Ovary (tissue), 10 donors: ENCODE measurements at regions of chr5 and their contacts with region 1.

Region 1: DNA sequence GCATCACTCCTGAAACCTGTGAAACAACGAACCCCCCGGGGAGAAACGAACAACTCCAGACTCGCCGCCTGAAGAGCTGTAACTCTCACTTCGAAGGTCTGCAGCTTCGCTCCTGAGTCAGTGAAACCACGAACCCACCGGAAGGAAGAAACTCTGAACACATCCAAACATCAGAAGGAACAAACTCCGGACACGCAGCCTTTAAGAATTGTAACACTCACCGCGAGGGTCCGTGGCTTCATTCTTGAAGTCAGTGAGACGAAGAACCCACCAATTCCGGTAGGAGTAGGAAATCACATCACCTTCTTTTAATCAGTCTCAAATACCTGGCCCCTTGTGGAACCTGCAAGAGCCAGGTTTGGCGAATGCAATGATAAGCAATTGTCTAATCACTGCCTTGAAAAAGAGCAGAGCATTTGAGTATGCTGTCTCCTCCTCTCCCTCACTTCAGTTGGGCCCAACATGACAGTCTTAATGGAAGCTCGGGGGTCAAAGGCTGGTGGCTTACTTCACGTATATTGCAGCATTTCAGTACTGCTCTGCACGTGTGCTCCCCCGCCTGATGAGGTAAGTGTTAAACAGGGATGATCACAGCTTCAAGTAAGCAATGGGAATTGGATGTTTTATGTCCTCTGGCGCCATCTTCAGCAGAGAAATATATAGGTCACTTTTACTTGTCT is 473 bp downstream of the IRGM start:
- DNase-seq: peak in 4 of 5 donors; percentile 30 to 64 (median 38)
- H3K4me3 ChIP-seq: no peak overlapping the region
- H3K27ac ChIP-seq: no peak overlapping the region
- H3K4me1 ChIP-seq: no peaks in the 10 kb centered on the region
- H3K27me3 ChIP-seq: no peaks in the 10 kb centered on the region
- CTCF ChIP-seq: peak; percentile 32 to 90 (median 80)
- EP300 ChIP-seq: no peak
- POLR2A ChIP-seq: no peak

Region 2: DNA sequence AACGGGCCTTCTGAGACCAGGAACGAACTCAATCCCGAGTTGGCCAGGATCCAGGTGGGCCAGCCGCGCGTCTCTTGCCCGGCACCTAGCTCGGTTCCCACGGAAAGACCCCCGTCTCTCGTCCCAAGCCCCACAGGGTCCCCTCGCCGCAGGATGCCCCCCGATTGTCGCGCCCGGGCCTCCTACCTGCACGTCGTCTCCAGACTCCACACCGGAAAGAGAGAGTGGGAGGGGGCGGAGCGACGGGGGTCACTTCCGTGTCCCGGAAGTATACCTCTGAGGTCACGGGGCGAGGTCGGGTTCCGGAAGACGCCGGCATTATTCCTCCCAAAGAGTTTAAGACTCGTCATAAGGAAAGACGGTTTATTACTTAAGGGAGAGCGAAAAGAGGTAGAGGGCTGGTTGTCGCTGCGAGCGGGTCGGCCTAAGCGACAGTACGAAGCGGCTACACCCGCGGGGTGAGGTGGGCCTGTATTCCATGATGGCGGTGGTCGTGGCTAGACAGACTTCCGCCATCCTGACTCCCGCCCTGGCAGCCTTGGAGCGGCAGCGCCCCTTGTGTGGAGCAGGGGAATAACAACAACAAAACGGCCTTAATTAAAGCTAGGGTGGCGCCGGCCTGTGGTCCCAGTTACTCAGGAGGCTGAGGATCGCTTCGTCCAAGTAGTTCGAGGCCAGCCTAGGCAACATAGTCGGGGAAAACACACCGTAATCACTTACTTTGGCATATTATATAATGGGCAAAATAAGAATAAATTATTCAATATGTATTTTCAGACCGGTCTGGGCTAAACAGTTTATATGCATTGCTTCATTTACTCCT is 397.1 kb before region 1 on chr5 and contains the start of gene RPS14:
- intact Hi-C with region 1: loop called in 2 of 4 experiments (anchors 10 kb)
- DNase-seq: peak; percentile 93 to 96 (median 95)
- H3K4me3 ChIP-seq: peak within 1 kb of the TSS; percentile 73
- H3K27ac ChIP-seq: peak within 1 kb of the TSS; percentile 82 to 94
- H3K4me1 ChIP-seq: peaks cover 3% of the 10 kb centered on the region
- H3K27me3 ChIP-seq: no peaks in the 10 kb centered on the region
- CTCF ChIP-seq: peak; percentile 95 to 98 (median 97)
- EP300 ChIP-seq: peak; percentile 31
- POLR2A ChIP-seq: peak; percentile 83
- total RNA-seq, gene RPS14: 2,727 to 9,295 (median 4,211) TPM

Region 3: GRCh38 chr5:150560401-150561193 is 286.2 kb before region 1 on chr5:
- intact Hi-C with region 1: loop called in 2 of 4 experiments (anchors 5 to 10 kb)
- DNase-seq: peak; percentile 64 to 95 (median 83)
- H3K4me3 ChIP-seq: no peak overlapping the region
- H3K27ac ChIP-seq: no peak overlapping the region
- H3K4me1 ChIP-seq: no peaks in the 10 kb centered on the region
- H3K27me3 ChIP-seq: no peaks in the 10 kb centered on the region
- CTCF ChIP-seq: peak; percentile 86 to 94 (median 90)
- EP300 ChIP-seq: no peak
- POLR2A ChIP-seq: no peak

Region 4: DNA sequence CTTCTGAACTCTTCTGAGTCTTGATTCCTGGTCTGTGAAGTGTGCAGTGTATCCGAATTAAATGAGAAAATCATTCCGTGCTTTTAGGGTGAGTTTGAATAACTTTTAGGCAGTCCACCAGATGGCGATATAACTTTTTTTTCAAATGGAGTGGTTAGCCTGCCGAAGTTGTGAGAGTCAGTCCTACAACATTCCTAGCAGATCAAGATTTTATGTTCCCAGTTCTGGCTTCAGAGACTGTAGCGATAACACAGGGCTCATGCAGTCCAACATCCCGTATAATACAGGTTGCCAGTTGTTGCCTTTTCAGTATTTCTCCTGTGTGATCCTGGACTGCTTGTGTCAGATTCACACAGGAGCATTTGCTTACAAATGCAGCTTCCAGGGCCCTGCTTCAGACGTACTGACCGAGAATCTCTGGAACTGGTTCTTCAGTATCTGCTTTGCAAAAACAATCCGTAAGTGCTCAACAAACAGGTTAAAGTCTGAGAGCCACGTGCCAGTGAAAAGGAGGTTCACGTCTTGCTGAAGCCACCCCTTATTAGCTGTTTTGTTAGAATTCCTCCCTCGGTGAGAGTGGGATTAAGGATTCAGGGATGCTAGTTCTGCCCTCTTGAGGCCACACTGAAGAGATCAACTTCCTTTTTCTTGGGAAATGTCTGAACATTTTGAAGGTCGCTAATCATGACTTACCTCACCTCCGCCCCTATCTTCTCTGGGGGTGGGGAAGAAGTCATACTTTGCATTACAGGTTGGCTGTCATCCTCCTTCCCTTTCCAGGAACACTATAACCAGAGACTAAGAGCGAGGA is 45.5 kb before region 1 on chr5:
- intact Hi-C with region 1: loop called in 1 of 4 experiments (anchors 5 kb)
- DNase-seq: peak in 2 of 5 donors; percentile 28 to 50
- H3K4me3 ChIP-seq: peak overlapping the region; percentile 34
- H3K27ac ChIP-seq: peak overlapping the region in 1 of 2 donors; percentile 55
- H3K4me1 ChIP-seq: no peaks in the 10 kb centered on the region
- H3K27me3 ChIP-seq: no peaks in the 10 kb centered on the region
- CTCF ChIP-seq: peak; percentile 5 to 67 (median 54)
- EP300 ChIP-seq: no peak
- POLR2A ChIP-seq: no peak

Region 5: DNA sequence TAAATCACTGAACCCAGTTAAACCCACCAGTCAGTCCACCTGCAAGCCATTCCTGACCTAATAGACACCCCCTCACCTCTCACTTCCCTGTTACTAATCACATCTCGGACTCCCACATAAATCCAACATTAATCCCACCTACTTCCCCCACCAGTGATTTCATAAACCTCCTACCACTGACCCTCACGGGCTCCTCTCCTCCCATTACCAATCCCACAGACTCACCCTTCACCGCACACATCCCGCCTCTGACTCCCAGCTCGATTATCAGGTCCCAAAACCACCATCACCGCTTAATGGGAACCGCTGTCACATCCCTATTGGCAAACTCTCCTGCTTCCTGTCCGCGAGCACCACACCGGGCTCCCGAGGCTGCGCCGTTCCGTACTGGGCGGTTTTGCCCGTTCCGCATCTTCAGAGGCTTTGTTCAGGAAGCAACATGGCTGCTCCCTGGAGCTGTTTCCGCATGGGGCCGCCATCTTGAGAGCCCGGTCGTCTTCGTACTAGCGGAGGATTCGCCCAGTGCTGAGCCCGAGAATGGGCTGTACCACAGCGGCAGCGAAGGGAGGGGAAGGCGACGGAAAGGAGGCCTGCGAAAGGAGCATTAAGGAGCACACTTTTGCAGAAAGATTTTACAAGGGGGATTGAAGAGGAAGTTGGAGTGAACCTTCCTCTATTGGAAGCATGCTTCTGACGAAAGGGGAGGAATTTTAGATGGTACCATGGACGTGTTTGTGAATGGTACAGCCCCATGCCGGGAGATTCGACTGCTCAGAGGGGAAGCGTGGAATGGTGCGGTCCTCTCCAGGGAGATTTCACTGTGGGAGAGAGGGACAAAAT is 57.9 kb after region 1 on chr5 and contains the start of gene ZNF300:
- intact Hi-C with region 1: loop called in 1 of 4 experiments (anchors 2 kb)
- DNase-seq: peak; percentile 85 to 91 (median 88)
- H3K4me3 ChIP-seq: peak within 1 kb of the TSS; percentile 52
- H3K27ac ChIP-seq: peak within 1 kb of the TSS in 1 of 2 donors; percentile 17
- H3K4me1 ChIP-seq: no peaks in the 10 kb centered on the region
- H3K27me3 ChIP-seq: no peaks in the 10 kb centered on the region
- CTCF ChIP-seq: peak in 1 of 3 donors; percentile 10
- EP300 ChIP-seq: peak; percentile 35
- POLR2A ChIP-seq: peak; percentile 48
- total RNA-seq, gene ZNF300: 5.9 to 10.0 (median 8.4) TPM